Activated T-helper 2 cell treated with anti-CD3 and anti-CD28 coated beads, Interferon-gamma antibody, Interleukin-2, Interleukin-4, amounts not matched to agents 10 μg/mL and 5 μg/mL and 100 μg/mL, durations not matched to agents 14 hours and 24 hours and 36 hours (primary cell): ENCODE measurements at regions of chr14 and their contacts with region 1.

Region 1: DNA sequence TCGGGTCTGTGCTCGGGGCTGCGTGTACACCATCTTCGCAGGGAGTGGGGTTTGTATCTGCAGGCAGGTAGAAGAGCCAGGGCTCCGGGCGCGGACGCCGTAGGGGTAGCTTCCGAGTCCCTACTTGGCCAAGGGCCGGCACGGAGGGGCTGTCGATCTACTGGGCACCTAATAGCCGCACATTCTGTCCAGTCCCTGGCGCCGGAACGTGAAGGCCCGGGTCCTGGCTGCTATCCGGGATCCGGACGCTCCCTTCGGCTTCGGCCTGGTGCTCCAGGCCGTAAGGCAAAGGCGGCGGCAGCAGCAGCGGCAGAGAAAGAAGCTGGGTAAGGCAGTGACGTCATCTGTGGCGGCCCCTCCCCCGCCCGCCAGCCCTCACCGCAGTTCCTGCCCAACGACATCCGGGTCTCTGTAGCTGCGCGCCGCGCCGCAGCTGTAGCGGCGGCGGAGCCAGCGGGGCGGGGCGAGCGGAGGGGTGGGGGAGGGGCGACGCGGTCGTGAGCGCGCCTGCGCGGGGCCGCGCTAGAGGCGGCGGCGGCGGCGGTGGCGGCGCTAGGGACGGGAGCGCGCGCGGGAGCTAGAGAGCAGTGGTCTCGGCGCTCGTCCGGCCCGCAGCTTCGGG is at the start of gene PPM1A:
- DNase-seq: peak; percentile 91
- H3K4me3 Mint-ChIP-seq: peak within 1 kb of the TSS; percentile 95
- H3K27ac Mint-ChIP-seq: peak within 1 kb of the TSS; percentile 100
- H3K4me1 Mint-ChIP-seq: peaks cover 47% of the 10 kb centered on the region
- H3K27me3 Mint-ChIP-seq: no peaks in the 10 kb centered on the region
- total RNA-seq, gene PPM1A: 45.7 and 48.2 TPM in 2 replicates

Region 2: GRCh38 chr14:60091550-60092530 is 157.0 kb before region 1 on chr14 and contains the start of gene PCNX4:
- intact Hi-C with region 1: loop called (anchors 1 kb)
- DNase-seq: peak; percentile 92
- H3K4me3 Mint-ChIP-seq: peak within 1 kb of the TSS; percentile 98
- H3K27ac Mint-ChIP-seq: peak within 1 kb of the TSS; percentile 99
- H3K4me1 Mint-ChIP-seq: peaks cover 31% of the 10 kb centered on the region
- H3K27me3 Mint-ChIP-seq: no peaks in the 10 kb centered on the region
- total RNA-seq, gene PCNX4: 38.8 and 46.3 TPM in 2 replicates

Region 3: DNA sequence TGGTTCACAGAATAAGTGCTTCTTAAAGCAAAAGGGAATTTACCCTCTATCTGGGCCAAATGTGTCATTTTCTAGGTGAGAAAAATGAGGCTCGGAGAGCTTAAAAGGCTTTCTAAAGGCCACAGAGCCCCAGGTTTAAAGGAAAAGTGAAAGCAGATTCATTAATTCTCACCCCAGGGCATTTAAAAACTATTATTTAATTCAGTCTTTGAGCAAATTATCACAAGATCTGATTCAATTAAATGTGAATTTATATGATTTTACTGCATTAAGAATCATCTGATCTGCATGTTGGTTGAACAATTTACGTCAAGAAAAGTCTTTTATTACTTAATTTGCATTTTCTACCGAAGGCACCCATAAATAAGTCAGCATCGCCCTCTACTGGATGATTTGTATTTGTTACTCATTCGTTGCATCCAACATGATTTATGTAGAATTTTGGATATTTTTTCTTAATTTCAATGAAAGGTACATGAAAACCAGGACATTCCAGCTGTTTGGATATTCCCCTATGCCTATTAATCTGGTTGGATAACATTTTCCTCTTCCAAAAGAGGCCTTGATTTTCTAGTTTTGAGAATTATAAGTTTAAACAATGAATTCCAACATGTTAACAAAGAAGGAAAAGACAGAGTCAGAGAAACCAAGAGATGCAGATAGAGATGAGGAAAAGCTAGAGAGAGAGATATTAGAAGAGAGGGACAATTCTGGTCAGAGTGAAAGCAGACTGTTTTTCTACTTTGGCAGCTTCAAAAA is 64.5 kb before region 1 on chr14:
- intact Hi-C with region 1: loop called (anchors 5 kb)
- DNase-seq: no peak
- H3K4me3 Mint-ChIP-seq: peak overlapping the region; percentile 63
- H3K27ac Mint-ChIP-seq: peak overlapping the region; percentile 66
- H3K4me1 Mint-ChIP-seq: peaks cover 14% of the 10 kb centered on the region
- H3K27me3 Mint-ChIP-seq: peaks cover 2% of the 10 kb centered on the region

Region 4: GRCh38 chr14:60266021-60266937 is 17.5 kb after region 1 on chr14:
- intact Hi-C with region 1: loop called (anchors 2 kb)
- DNase-seq: no peak
- H3K4me3 Mint-ChIP-seq: no peak overlapping the region
- H3K27ac Mint-ChIP-seq: no peak overlapping the region
- H3K4me1 Mint-ChIP-seq: peaks cover 10% of the 10 kb centered on the region
- H3K27me3 Mint-ChIP-seq: no peaks in the 10 kb centered on the region

Region 5: GRCh38 chr14:60753264-60754119 is 504.7 kb after region 1 on chr14:
- intact Hi-C with region 1: loop called (anchors 5 kb)
- DNase-seq: peak; percentile 67
- H3K4me3 Mint-ChIP-seq: peak overlapping the region; percentile 37
- H3K27ac Mint-ChIP-seq: peak overlapping the region; percentile 87
- H3K4me1 Mint-ChIP-seq: peaks cover 57% of the 10 kb centered on the region
- H3K27me3 Mint-ChIP-seq: no peaks in the 10 kb centered on the region